ENCODE measurements at regions of chr6 and their contacts with region 1.

Region 1: GRCh38 chr6:13711733-13712598 is at the start of gene RANBP9:
- DNase-seq: peak; percentile 76 to 94 (median 86)
- ATAC-seq: peak; percentile 82
- H3K4me3 ChIP-seq: peak within 1 kb of the TSS; percentile 77 to 81
- H3K4me3 Mint-ChIP-seq: peak within 1 kb of the TSS; percentile 93
- H3K27ac ChIP-seq: peak within 1 kb of the TSS; percentile 77 to 83
- H3K27ac Mint-ChIP-seq: peak within 1 kb of the TSS; percentile 97
- H3K4me1 ChIP-seq: peaks cover 22% of the 10 kb centered on the region
- H3K4me1 Mint-ChIP-seq: peaks cover 43% of the 10 kb centered on the region
- H3K27me3 ChIP-seq: no peaks in the 10 kb centered on the region
- H3K27me3 Mint-ChIP-seq: no peaks in the 10 kb centered on the region
- CTCF ChIP-seq: no peak
- total RNA-seq, gene RANBP9: 79.1 to 81.9 TPM

Region 2: DNA sequence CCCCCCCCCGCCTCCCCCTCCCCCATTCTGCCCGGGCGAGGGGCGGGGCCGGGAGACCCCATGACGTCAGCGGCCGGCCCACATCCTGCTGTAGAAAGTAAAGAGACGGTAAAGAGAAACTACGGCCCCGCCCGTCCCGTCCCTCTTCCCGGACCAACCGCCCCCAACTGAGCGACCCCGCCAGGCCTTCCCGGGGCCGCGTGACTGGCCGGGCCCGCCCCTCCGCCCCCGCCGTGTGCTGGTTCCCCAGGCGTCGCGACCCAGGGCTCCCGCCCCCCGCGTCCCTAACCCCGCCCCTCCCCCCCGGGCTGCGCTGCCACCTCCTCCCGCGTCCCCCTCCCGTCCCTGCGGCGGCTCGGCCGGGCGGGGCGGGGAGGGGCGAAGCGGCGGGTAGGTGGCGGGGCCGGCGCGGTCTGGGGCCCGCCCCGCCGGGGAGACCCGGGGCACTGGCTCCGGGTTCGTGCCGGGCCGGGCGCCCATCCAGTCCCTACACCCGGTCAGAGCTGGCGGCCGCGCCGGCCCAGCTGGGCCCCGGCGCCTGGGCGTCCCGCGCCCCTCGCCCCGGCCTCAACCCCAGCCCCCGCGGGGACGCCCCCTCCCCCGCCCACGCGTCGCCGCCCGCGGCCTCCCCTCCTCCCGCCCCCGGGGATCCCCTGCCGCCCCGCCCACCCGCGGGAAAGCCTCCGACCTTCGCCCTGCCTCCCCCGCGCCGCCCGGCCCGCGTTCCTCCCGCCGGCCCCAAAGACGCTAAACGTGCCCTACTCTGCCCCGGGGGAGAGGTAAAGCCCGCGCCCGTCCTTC is 1700.5 kb before region 1 on chr6:
- CTCF ChIA-PET with region 1: no interaction called
- POLR2A ChIA-PET with region 1: no interaction called
- intact Hi-C with region 1: loop called in 1 of 2 experiments (anchors 5 kb)
- DNase-seq: peak; percentile 92 to 99 (median 96)
- ATAC-seq: peak; percentile 71
- H3K4me3 ChIP-seq: peak overlapping the region in 1 of 2 experiments; percentile 73
- H3K4me3 Mint-ChIP-seq: peak overlapping the region; percentile 91
- H3K27ac ChIP-seq: peak overlapping the region in 1 of 2 experiments; percentile 93
- H3K27ac Mint-ChIP-seq: peak overlapping the region; percentile 94
- H3K4me1 ChIP-seq: peaks cover 28% of the 10 kb centered on the region
- H3K4me1 Mint-ChIP-seq: peaks cover 60% of the 10 kb centered on the region
- H3K27me3 ChIP-seq: no peaks in the 10 kb centered on the region
- H3K27me3 Mint-ChIP-seq: no peaks in the 10 kb centered on the region
- CTCF ChIP-seq: no peak

Region 3: DNA sequence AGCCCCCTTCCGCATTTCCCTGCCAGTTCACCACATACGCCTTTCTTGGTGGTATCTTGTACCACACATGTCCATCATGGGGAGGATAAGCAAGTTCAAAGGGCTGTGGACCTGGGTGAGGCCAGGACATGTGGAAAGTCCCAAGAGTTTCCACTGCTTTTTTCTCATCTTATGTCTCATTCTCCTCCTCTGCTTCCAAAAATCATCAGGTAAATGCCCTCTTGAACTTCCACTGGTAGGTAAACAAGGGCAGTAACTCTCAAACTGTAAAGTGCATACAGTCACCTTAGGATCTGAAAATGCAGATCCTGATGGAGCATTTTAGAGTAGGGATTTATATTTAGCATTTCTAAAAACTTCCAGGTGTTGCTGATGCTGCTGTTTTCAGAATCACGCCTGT is 145.5 kb before region 1 on chr6:
- CTCF ChIA-PET with region 1: no interaction called
- POLR2A ChIA-PET with region 1: no interaction called
- intact Hi-C with region 1: no loop called
- DNase-seq: no peak
- ATAC-seq: no peak
- H3K4me3 ChIP-seq: no peak overlapping the region
- H3K4me3 Mint-ChIP-seq: no peak overlapping the region
- H3K27ac ChIP-seq: no peak overlapping the region
- H3K27ac Mint-ChIP-seq: no peak overlapping the region
- H3K4me1 ChIP-seq: no peaks in the 10 kb centered on the region
- H3K4me1 Mint-ChIP-seq: no peaks in the 10 kb centered on the region
- H3K27me3 ChIP-seq: no peaks in the 10 kb centered on the region
- H3K27me3 Mint-ChIP-seq: peaks cover 22% of the 10 kb centered on the region
- CTCF ChIP-seq: no peak

Region 4: DNA sequence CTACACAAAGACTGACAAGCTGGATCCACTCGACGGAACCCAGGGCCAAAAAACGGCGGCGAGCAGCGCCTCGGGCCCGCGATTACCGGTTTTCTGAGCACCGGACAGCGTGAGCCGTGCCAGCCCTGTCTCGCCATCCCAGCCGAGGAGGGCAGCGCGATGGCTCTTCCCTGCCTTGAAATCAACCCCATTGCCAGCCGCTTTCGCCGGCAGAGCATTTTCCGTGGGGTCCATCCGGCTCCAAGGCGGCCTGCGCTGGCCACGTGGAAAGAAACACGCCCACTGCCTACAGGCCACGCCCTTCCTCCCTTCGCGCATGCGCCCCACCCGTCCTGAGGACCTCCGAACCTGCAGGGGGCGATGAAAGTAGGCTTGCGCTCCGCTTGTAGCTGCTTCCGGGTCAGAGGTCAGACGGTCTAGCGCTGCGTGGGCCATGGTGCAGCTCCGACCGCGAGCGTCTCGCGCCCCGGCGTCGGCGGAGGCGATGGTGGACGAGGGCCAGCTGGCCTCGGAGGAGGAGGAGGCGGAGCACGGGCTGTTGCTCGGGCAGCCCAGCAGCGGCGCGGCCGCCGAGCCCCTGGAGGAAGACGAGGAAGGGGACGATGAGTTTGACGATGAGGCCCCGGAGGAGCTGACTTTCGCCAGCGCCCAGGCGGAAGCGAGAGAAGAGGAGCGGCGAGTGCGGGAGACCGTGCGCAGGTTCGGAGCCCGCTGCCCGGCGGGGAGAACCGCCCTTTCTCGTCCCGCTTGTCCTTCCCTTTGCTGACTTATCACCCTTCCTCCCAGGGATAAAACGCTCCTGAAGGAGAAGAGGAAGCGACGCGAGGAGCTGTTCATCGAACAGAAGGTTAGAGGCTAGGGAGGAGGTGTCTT is 96.8 kb before region 1 on chr6 and contains the start of gene NOL7:
- CTCF ChIA-PET with region 1: interaction called, 32 read pairs
- POLR2A ChIA-PET with region 1: interaction called, 59 read pairs
- intact Hi-C with region 1: loop called (anchors 1 kb)
- DNase-seq: peak; percentile 96 to 99 (median 99)
- ATAC-seq: peak; percentile 93
- H3K4me3 ChIP-seq: peak within 1 kb of the TSS; percentile 86 to 97
- H3K4me3 Mint-ChIP-seq: peak within 1 kb of the TSS; percentile 99
- H3K27ac ChIP-seq: peak within 1 kb of the TSS; percentile 83 to 88
- H3K27ac Mint-ChIP-seq: peak within 1 kb of the TSS; percentile 98
- H3K4me1 ChIP-seq: peaks cover 28% of the 10 kb centered on the region
- H3K4me1 Mint-ChIP-seq: peaks cover 39% of the 10 kb centered on the region
- H3K27me3 ChIP-seq: no peaks in the 10 kb centered on the region
- H3K27me3 Mint-ChIP-seq: no peaks in the 10 kb centered on the region
- CTCF ChIP-seq: peak; percentile 94
- total RNA-seq, gene NOL7: 70.5 to 71.1 TPM

Region 5: DNA sequence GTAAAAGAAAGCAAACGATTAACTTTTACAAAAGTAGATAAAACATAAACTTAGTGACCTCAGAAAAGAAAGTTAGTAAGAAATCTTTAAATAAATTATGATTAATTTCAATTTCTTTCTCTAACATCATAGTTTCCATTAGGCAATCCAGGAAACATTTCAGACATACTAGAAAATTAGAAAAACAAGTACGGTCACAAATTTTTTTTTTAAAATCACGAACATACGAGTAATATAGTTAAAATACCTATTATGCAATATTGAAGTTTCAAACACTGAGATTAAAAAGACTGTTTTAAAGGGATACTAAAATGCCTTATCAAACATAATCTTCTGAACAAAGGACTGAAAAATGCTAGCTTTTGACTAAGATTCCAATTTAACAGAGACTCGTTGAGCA is 70.7 kb before region 1 on chr6:
- CTCF ChIA-PET with region 1: no interaction called
- POLR2A ChIA-PET with region 1: no interaction called
- intact Hi-C with region 1: loop called in 1 of 2 experiments (anchors 5 kb)
- DNase-seq: no peak
- ATAC-seq: no peak
- H3K4me3 ChIP-seq: no peak overlapping the region
- H3K4me3 Mint-ChIP-seq: no peak overlapping the region
- H3K27ac ChIP-seq: no peak overlapping the region
- H3K27ac Mint-ChIP-seq: no peak overlapping the region
- H3K4me1 ChIP-seq: peaks cover under 1% of the 10 kb centered on the region
- H3K4me1 Mint-ChIP-seq: peaks cover 11% of the 10 kb centered on the region
- H3K27me3 ChIP-seq: no peaks in the 10 kb centered on the region
- H3K27me3 Mint-ChIP-seq: no peaks in the 10 kb centered on the region
- CTCF ChIP-seq: no peak

Region 6: DNA sequence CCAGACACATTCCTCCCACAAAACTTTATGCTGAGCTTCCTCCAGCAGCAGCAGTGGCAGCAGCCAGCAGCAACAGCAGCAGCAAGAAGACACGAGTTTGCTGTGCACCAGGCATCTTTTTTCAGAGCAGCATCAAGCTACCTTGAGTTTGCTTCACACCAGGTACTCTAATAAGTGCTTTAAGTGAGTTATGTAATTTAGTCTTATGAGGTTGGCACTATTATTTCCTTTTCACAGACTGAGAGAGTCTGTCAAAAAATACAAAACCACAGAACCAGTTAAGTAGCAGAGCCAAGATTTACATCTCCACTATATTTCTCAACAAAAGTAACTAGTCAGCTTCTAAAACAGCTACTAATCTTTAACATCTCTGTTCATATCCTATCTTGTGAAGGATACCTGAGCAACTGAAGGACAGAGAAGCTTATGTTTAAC is 24.0 kb before region 1 on chr6:
- CTCF ChIA-PET with region 1: interaction called, 10 read pairs
- POLR2A ChIA-PET with region 1: interaction called, 16 read pairs
- intact Hi-C with region 1: no loop called
- DNase-seq: peak in 5 of 9 experiments; percentile 26 to 69 (median 28)
- ATAC-seq: peak; percentile 80
- H3K4me3 ChIP-seq: peak overlapping the region in 1 of 2 experiments; percentile 22
- H3K4me3 Mint-ChIP-seq: peak overlapping the region; percentile 70
- H3K27ac ChIP-seq: peak overlapping the region; percentile 33 to 73
- H3K27ac Mint-ChIP-seq: peak overlapping the region; percentile 97
- H3K4me1 ChIP-seq: peaks cover 56% of the 10 kb centered on the region
- H3K4me1 Mint-ChIP-seq: peaks cover 73% of the 10 kb centered on the region
- H3K27me3 ChIP-seq: no peaks in the 10 kb centered on the region
- H3K27me3 Mint-ChIP-seq: no peaks in the 10 kb centered on the region
- CTCF ChIP-seq: no peak

Region 7: DNA sequence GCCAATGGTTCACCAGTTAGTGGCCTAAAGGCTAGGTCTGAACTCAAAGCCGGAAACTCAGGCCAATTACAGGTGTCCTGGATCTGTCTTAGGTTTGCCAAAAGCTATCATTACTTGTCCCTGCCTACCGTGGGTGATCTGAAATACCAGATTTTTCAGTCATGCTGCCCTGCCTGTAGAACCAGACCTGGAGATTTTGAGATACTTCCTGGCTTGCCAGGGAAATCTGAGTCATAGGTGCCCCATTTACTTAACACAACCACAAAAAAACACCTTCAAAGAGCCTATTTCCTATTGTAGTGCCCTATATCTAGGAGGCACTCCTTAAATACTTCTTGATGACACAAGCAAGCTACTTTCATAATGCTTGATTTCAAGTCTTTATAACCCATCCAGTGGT is 13.6 kb after region 1 on chr6:
- CTCF ChIA-PET with region 1: no interaction called
- POLR2A ChIA-PET with region 1: interaction called, 6 read pairs
- intact Hi-C with region 1: loop called in 1 of 2 experiments (anchors 1 kb)
- DNase-seq: peak in 6 of 9 experiments; percentile 19 to 60 (median 51)
- ATAC-seq: peak; percentile 76
- H3K4me3 ChIP-seq: no peak overlapping the region
- H3K4me3 Mint-ChIP-seq: peak overlapping the region; percentile 44
- H3K27ac ChIP-seq: no peak overlapping the region
- H3K27ac Mint-ChIP-seq: peak overlapping the region; percentile 87
- H3K4me1 ChIP-seq: peaks cover 9% of the 10 kb centered on the region
- H3K4me1 Mint-ChIP-seq: peaks cover 25% of the 10 kb centered on the region
- H3K27me3 ChIP-seq: no peaks in the 10 kb centered on the region
- H3K27me3 Mint-ChIP-seq: no peaks in the 10 kb centered on the region
- CTCF ChIP-seq: no peak

Region 8: DNA sequence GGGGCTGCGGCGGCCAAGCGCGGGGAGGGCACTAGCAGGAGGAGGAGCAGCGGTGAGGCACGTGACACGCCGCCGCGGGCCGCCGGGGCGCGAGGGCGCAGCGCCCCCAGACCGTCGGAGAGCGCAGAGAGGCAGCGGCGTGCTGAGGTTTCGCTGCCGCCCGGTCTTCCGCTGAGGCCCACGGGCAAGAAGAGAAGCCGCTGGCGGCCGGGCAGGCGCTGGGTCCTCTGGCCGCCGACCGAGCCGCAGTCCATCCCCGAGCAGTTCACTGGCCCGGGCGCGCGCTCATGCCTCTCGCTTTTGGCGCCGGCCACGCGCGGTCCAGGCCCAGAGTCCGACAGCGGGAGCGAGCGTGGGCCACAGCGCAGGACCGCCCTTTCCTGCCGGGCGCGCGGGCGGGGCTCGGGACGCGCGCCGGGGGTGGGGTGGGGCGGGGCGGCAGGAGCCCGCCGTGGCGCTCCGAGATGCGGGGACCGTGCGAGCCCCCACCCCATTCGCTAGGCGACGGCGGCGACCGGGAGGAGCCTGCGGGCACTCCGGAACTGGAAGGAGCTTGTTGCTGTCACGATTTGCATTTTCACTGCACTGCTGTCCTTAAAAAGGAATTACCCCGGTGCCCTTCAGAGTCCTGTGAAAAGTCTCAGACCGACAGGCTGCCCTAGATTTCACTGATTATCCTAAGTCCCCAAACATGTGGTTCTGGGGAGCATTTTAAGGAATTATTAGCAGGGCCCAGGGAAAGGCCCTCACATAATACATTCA is 102.4 kb after region 1 on chr6 and contains the start of gene MCUR1:
- CTCF ChIA-PET with region 1: no interaction called
- POLR2A ChIA-PET with region 1: interaction called, 6 read pairs
- intact Hi-C with region 1: loop called (anchors 1 to 5 kb)
- DNase-seq: peak; percentile 51 to 92 (median 74)
- ATAC-seq: peak; percentile 80
- H3K4me3 ChIP-seq: peak within 1 kb of the TSS; percentile 71
- H3K4me3 Mint-ChIP-seq: peak within 1 kb of the TSS; percentile 87
- H3K27ac ChIP-seq: peak within 1 kb of the TSS; percentile 61 to 76
- H3K27ac Mint-ChIP-seq: peak within 1 kb of the TSS; percentile 85
- H3K4me1 ChIP-seq: peaks cover 14% of the 10 kb centered on the region
- H3K4me1 Mint-ChIP-seq: peaks cover 34% of the 10 kb centered on the region
- H3K27me3 ChIP-seq: no peaks in the 10 kb centered on the region
- H3K27me3 Mint-ChIP-seq: no peaks in the 10 kb centered on the region
- CTCF ChIP-seq: no peak
- total RNA-seq, gene MCUR1: 2.1 to 3.4 TPM

Region 9: GRCh38 chr6:14037402-14038277 is 325.7 kb after region 1 on chr6:
- CTCF ChIA-PET with region 1: no interaction called
- POLR2A ChIA-PET with region 1: no interaction called
- intact Hi-C with region 1: no loop called
- DNase-seq: no peak
- ATAC-seq: no peak
- H3K4me3 ChIP-seq: no peak overlapping the region
- H3K4me3 Mint-ChIP-seq: no peak overlapping the region
- H3K27ac ChIP-seq: no peak overlapping the region
- H3K27ac Mint-ChIP-seq: no peak overlapping the region
- H3K4me1 ChIP-seq: no peaks in the 10 kb centered on the region
- H3K4me1 Mint-ChIP-seq: no peaks in the 10 kb centered on the region
- H3K27me3 ChIP-seq: peaks cover 3% of the 10 kb centered on the region in 2 experiments
- H3K27me3 Mint-ChIP-seq: peaks cover 19% of the 10 kb centered on the region
- CTCF ChIP-seq: no peak

Region 10: DNA sequence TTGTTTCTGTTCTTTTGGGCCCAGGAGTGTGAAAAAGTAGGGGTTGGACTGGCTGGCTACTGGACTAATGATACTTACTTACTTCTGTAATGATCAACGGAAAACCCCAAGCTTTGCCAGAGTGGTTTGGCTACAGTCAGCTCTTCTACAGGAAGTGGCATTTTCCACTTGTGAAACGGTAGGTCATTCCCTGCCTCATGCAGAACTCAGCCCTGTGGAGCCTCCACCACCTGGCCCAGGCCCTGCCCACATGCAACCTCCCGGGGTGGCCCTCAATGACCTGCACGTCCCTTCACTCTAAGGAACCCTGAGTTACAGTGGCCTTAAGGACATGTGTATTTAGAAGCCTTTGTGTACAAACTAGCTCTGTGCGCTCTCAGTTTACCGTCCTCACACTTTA is 1810.5 kb after region 1 on chr6:
- CTCF ChIA-PET with region 1: no interaction called
- POLR2A ChIA-PET with region 1: no interaction called
- intact Hi-C with region 1: no loop called
- DNase-seq: no peak
- ATAC-seq: no peak
- H3K4me3 ChIP-seq: no peak overlapping the region
- H3K4me3 Mint-ChIP-seq: no peak overlapping the region
- H3K27ac ChIP-seq: no peak overlapping the region
- H3K27ac Mint-ChIP-seq: peak overlapping the region; percentile 49
- H3K4me1 ChIP-seq: no peaks in the 10 kb centered on the region
- H3K4me1 Mint-ChIP-seq: peaks cover 2% of the 10 kb centered on the region
- H3K27me3 ChIP-seq: no peaks in the 10 kb centered on the region
- H3K27me3 Mint-ChIP-seq: no peaks in the 10 kb centered on the region
- CTCF ChIP-seq: no peak